ENCODE measurements at regions of chr21 and their contacts with region 1.

Region 1: DNA sequence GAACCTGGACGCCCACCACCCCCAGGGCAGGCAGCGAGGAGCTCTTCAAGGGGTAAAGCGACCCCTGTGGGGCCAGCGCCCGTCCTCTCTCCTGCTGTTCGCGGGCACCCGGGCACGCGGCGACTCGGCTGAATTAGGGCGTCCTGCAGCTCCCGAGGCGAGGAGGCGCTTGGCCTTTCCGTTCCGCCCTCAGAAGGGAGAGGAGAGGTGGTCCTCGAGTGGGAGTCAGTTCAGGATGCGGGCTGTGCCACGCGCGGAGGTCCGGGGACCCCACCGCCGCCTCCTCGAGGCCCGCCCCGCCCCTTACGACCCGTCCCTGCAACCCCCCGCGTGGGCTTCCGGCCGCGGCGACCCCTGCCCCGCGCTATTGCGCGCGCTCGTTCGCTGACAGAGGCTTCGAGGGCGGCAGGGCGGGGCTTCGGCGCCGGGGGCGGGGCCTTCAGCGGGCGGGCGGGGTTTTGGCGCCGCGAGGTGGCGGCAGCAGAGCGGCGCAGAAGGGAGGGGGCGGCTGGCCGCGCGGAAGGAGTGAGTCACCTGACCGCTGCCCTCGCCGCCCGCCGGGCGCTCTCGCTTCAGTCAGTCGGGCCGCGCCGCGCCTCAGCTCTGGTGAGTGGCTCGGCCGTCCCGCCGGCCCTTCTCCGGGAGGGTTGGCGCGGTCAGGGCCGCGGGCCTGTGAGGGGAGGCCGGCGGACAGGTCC is at the start of gene BACH1:
- DNase-seq: peak; percentile 94
- H3K4me3 ChIP-seq: peak within 1 kb of the TSS; percentile 83 to 98 (median 94)
- H3K27ac ChIP-seq: peak within 1 kb of the TSS; percentile 95 to 98 (median 96)
- H3K4me1 ChIP-seq: peaks cover 26 to 48% (median 43%) of the 10 kb centered on the region in 4 donors
- H3K27me3 ChIP-seq: no peaks in the 10 kb centered on the region
- CTCF ChIP-seq: peak; percentile 57 to 67 (median 60)
- EP300 ChIP-seq: no peak
- POLR2A ChIP-seq: peak; percentile 85
- total RNA-seq, gene BACH1: 43.8 to 86.3 (median 50.9) TPM

Region 2: GRCh38 chr21:29181799-29182470 is 116.6 kb before region 1 on chr21:
- intact Hi-C with region 1: loop called (anchors 5 kb)
- DNase-seq: no peak
- H3K4me3 ChIP-seq: peak overlapping the region; percentile 29 to 53 (median 36)
- H3K27ac ChIP-seq: peak overlapping the region; percentile 64 to 79 (median 76)
- H3K4me1 ChIP-seq: peaks cover 17 to 40% (median 31%) of the 10 kb centered on the region in 4 donors
- H3K27me3 ChIP-seq: no peaks in the 10 kb centered on the region
- CTCF ChIP-seq: no peak
- EP300 ChIP-seq: peak; percentile 73
- POLR2A ChIP-seq: no peak

Region 3: DNA sequence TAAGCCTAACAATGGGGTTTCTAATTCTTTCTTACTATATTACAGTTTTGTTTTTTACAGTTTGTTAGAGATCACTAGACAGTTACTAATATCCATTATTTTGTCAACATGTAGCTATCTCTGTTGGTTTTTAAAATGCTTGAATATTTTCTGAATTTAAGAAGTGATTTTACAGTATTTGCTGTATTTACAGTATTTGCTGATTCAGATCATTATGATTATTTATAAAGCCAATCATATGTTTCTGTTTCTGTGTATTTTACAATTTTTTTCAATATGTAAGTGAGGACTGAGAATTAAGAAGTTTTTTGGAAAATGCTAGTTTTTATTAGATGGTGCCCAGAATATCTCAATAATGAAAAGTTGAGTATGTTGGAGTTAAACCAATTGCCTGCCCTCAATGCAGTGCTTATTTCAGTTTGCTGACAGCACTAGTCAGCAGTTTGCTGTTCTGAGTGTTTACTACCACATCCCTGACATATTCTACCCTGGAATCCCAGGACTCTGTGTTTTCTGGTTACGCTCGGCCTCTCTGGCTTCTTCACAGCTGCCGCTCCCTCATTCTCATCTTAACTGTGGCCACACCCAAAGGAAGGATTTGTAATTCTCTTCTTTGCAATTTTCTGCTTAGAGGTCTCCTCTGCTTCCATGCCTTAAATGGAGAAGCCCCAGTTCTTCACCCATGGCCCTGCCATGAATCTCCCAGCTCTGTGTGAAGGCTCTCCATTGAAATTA is 67.8 kb before region 1 on chr21:
- intact Hi-C with region 1: no loop called
- DNase-seq: no peak
- H3K4me3 ChIP-seq: no peak overlapping the region
- H3K27ac ChIP-seq: no peak overlapping the region
- H3K4me1 ChIP-seq: no peaks in the 10 kb centered on the region
- H3K27me3 ChIP-seq: no peaks in the 10 kb centered on the region
- CTCF ChIP-seq: no peak
- EP300 ChIP-seq: no peak
- POLR2A ChIP-seq: no peak

Region 4: DNA sequence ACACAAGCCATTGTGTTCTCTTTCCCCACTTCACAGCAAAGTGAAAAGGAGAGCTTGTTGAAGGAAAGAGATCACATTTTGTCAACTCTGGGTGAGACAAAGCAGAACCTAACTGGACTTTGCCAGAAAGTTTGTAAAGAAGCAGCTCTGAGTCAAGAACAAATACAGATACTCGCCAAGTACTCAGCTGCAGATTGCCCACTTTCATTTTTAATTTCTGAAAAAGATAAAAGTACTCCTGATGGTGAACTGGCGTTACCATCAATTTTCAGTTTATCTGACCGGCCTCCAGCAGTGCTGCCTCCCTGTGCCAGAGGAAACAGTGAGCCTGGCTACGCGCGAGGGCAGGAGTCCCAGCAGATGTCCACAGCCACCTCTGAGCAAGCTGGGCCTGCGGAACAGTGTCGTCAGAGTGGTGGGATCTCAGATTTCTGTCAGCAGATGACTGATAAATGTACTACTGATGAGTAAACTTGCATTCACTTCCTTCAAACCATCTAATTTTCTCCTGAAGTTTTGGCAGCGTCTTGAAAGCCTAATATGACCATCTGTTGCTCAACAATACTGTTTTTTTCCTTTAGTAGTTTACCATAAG is 44.0 kb after region 1 on chr21:
- intact Hi-C with region 1: loop called (anchors 2 kb)
- DNase-seq: no peak
- H3K4me3 ChIP-seq: peak overlapping the region; percentile 8 to 27 (median 21)
- H3K27ac ChIP-seq: peak overlapping the region; percentile 63 to 80 (median 68)
- H3K4me1 ChIP-seq: peaks cover 54 to 78% (median 68%) of the 10 kb centered on the region in 4 donors
- H3K27me3 ChIP-seq: no peaks in the 10 kb centered on the region
- CTCF ChIP-seq: no peak
- EP300 ChIP-seq: no peak
- POLR2A ChIP-seq: no peak

Region 5: GRCh38 chr21:30515681-30516080 is 1217.2 kb after region 1 on chr21:
- intact Hi-C with region 1: no loop called
- DNase-seq: no peak
- H3K4me3 ChIP-seq: no peak overlapping the region
- H3K27ac ChIP-seq: no peak overlapping the region
- H3K4me1 ChIP-seq: no peaks in the 10 kb centered on the region
- H3K27me3 ChIP-seq: no peaks in the 10 kb centered on the region
- CTCF ChIP-seq: no peak
- EP300 ChIP-seq: no peak
- POLR2A ChIP-seq: no peak

Measured in esophagus muscularis mucosa (tissue), 4 donors.